ENCODE measurements at regions of chr10 and their contacts with region 1.

Region 1: GRCh38 chr10:121927841-121928527 is at the start of gene ATE1:
- DNase-seq: peak; percentile 69 to 87 (median 80)
- ATAC-seq: peak; percentile 94 to 95
- H3K4me3 Mint-ChIP-seq: peak within 1 kb of the TSS; percentile 83 to 95 (median 92)
- H3K27ac Mint-ChIP-seq: peak within 1 kb of the TSS; percentile 86 to 97 (median 96)
- H3K4me1 Mint-ChIP-seq: peaks cover 10 to 43% (median 33%) of the 10 kb centered on the region in 4 donors
- H3K27me3 Mint-ChIP-seq: no peaks in the 10 kb centered on the region
- polyA plus RNA-seq, gene ATE1: 19.1 to 24.5 (median 24.0) TPM

Region 2: GRCh38 chr10:121956111-121957061 is 28.4 kb after region 1 on chr10:
- POLR2A ChIA-PET with region 1: no interaction called
- DNase-seq: no peak
- ATAC-seq: no peak
- H3K4me3 Mint-ChIP-seq: no peak overlapping the region
- H3K27ac Mint-ChIP-seq: peak overlapping the region in 5 of 10 donors; percentile 4 to 75 (median 38)
- H3K4me1 Mint-ChIP-seq: peaks cover 0 to 2% (median 0%) of the 10 kb centered on the region in 4 donors
- H3K27me3 Mint-ChIP-seq: no peaks in the 10 kb centered on the region

Region 3: DNA sequence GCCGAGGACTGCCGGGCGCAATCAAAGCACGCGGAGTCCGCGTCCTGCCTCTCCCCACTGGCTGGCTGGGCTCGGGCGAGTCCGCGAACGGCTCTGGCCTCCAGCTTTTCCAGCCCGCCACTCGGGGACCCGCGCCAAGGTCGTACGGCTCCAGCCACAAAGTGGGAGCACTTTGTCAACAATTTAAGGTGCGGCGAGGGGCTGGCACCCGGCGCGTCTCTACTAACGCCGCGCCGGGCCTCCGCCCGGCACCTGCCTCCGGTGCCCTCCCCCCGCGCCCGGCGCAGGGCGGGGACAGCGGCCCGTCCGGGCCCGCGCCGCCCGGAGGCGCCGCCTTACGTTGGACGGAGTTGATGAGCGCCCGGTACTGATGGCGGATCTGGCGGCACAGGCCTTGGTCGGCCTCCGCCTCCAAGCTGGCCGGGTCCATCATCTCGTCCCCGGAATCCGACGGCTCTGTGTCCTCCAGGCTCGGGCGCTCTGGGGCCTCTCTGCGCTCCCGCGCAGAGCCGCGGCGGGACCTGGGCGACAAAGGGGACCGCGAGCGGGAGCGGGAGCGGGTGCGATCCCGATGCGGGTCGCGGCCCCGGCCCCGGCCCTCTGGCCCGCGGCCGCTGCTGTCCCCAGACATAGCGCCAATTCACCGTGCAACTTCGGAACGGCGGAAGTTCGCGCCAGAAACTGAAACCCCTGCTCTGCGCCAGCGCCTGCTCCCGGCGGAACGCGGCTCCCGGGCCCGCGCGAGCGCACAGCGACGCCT is 46.7 kb after region 1 on chr10 and contains the start of gene NSMCE4A:
- POLR2A ChIA-PET with region 1: interaction called, 26 read pairs
- DNase-seq: peak; percentile 38 to 74 (median 62)
- ATAC-seq: peak; percentile 88
- H3K4me3 Mint-ChIP-seq: peak within 1 kb of the TSS; percentile 51 to 89 (median 82)
- H3K27ac Mint-ChIP-seq: peak within 1 kb of the TSS in 9 of 10 donors; percentile 4 to 74 (median 48)
- H3K4me1 Mint-ChIP-seq: peaks cover 11 to 34% (median 28%) of the 10 kb centered on the region in 4 donors
- H3K27me3 Mint-ChIP-seq: no peaks in the 10 kb centered on the region
- polyA plus RNA-seq, gene NSMCE4A: 43.5 to 49.8 (median 46.7) TPM

Measured in naive thymus-derived CD8-positive, alpha-beta T cell (primary cell).